ENCODE measurements at regions of chr15 and their contacts with region 1.

Region 1: DNA sequence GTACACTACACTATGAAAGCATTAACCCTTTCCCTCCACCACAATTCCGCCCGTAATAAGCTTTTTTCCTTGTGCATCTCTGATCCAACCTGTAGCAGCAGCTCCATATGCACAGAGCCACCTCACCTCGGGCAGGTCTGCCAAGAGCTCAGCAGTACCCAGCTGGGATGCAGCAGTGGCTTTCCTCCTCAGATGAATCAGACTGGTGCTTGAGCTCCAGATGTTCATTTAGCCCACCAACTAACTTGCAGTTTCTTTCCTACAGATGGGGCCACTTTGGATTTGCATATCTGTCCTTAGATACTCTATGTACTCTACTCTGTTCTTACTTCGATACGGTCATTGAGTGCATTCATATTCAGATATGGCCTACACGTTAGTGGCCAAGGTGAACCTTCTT is 14.8 kb upstream of the FSIP1 start:
- DNase-seq: no peak
- ATAC-seq: no peak
- H3K4me3 Mint-ChIP-seq: no peak overlapping the region
- H3K27ac Mint-ChIP-seq: no peak overlapping the region
- H3K4me1 Mint-ChIP-seq: peaks cover 30% of the 10 kb centered on the region
- H3K27me3 Mint-ChIP-seq: no peaks in the 10 kb centered on the region
- CTCF ChIP-seq: no peak

Region 2: DNA sequence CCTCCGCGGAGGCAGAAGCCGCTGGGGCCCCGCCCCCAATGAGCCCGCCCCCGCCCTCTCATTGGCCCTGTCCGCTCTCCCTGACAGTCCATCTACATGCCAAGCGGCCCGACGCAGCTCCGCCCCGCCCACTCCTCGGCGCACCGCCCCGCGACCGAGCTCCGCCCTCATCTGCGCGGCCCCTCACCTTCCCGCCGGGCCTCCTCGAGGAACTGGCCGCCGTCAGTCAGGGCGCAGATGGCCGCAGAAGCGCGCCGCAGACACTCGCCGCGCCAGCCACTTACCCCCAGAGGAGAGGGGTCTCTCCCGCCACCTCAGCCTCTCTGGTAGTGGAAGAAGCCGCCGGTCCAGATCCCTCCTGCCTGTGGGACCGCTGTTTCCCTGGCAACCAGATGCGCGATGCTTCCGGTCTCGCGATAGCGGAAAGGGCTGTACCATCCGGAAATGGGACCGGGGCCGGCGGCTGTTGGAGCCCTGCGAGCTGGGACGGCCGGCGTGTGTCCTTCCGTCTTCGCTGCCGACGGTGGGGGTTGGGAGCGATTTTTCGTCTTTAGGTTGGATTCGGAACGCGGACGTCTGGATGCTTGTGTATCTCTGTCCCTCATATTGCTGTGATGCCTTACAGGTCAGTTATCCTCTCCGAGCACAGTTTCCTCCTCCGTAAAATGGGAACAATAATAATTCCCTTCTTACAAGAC is 14.8 kb before region 1 on chr15 and contains the start of gene FSIP1:
- CTCF ChIA-PET with region 1: interaction called, 12 read pairs
- POLR2A ChIA-PET with region 1: no interaction called
- DNase-seq: peak; percentile 97
- ATAC-seq: peak; percentile 97
- H3K4me3 Mint-ChIP-seq: peak within 1 kb of the TSS; percentile 79
- H3K27ac Mint-ChIP-seq: peak within 1 kb of the TSS; percentile 89
- H3K4me1 Mint-ChIP-seq: peaks cover 52% of the 10 kb centered on the region
- H3K27me3 Mint-ChIP-seq: no peaks in the 10 kb centered on the region
- CTCF ChIP-seq: no peak
- total RNA-seq, gene FSIP1: 0.55 to 0.61 TPM (median 0.60 TPM) in 3 replicates